Prostate gland (tissue), 2 donors: ENCODE measurements at regions of chr17 and their contacts with region 1.

Region 1: DNA sequence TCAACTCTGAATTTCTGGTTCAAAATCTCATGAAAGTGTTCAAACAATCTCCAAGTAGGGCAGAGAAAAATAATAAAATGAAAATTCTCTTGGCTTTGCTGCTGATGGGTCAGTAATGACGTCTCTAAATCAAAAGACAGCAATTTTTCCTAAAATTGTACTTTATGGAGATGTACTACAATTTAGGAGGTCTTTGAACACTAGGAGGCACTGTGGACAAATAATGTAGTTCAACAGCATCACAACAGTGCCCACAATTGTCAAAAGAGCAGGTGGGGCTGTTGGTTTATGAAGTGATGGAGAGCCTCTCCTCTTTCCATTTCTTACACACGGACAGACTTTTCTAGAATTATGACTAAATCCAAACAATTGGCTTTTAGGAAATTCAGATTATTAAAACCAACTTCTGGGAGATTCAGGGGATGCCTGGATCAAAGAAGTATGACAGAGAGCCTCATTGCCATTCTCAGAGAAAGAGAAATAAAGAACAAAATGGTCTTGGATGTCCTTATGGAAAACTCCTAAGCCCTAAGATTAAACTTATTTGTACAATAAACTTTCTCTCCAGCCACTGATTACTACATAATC is 23.8 kb downstream of the EZH1 start:
- DNase-seq: peak; percentile 54
- H3K4me3 ChIP-seq: no peak overlapping the region
- H3K27ac ChIP-seq: peak overlapping the region in 1 of 2 donors; percentile 20
- H3K4me1 ChIP-seq: no peaks in the 10 kb centered on the region
- H3K27me3 ChIP-seq: no peaks in the 10 kb centered on the region
- CTCF ChIP-seq: peak; percentile 37 to 88 (median 74)
- POLR2A ChIP-seq: no peak

Region 2: DNA sequence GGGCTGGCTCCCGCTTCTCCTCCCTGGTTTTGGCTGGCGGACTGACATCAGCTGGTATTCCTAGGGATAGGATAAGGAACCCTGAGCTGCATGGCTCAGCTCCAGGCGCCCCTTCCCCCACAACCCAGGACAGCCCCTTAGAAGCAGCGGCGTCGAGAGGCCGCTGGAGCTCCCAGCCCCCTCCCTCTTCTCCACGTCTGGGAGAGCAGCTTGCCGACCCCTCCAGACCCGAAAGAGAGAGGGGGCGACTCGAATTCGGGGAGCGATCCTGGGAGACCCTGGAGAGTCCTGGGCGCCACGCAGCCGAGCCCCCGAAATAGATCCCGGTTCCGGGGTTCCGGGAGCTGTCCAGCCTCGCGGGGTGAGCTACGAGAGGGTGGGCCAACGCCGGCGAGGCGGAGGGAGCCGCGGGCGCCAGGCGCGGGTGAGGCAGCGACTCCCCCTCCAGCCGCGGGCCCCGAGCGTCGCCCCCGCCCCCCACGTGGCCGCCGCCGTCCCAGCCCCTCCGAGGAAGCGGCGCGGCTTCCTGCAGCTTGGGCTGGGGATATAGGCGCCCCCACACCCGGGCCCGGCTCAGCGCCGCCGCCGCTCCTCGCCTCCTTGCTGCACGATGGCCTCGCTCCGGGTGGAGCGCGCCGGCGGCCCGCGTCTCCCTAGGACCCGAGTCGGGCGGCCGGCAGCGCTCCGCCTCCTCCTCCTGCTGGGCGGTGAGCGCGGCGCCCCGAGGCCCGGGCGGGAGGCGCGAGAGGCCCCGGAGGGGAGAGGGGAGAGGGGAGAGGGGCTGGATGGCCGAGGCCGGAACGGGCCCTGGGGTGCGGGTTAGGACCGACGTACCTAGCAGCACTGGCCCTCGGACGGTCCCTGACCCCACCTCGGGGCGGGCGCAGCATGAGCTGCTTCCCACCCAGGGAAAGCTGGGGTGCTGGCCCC is 39.8 kb after region 1 on chr17 and contains the start of gene RAMP2:
- intact Hi-C with region 1: loop called (anchors 2 kb)
- DNase-seq: no peak
- H3K4me3 ChIP-seq: peak within 1 kb of the TSS; percentile 48 to 52
- H3K27ac ChIP-seq: peak within 1 kb of the TSS; percentile 47 to 53
- H3K4me1 ChIP-seq: no peaks in the 10 kb centered on the region
- H3K27me3 ChIP-seq: no peaks in the 10 kb centered on the region
- CTCF ChIP-seq: peak in 1 of 4 experiments; percentile 13
- POLR2A ChIP-seq: no peak
- total RNA-seq, gene RAMP2: 16.3 TPM

Region 3: GRCh38 chr17:42819944-42820535 is 99.0 kb after region 1 on chr17:
- intact Hi-C with region 1: loop called (anchors 5 kb)
- DNase-seq: no peak
- H3K4me3 ChIP-seq: no peak overlapping the region
- H3K27ac ChIP-seq: no peak overlapping the region
- H3K4me1 ChIP-seq: no peaks in the 10 kb centered on the region
- H3K27me3 ChIP-seq: no peaks in the 10 kb centered on the region
- CTCF ChIP-seq: peak; percentile 10 to 53 (median 24)
- POLR2A ChIP-seq: no peak